Breast epithelium (tissue), 4 donors: ENCODE measurements at regions of chr5 and their contacts with region 1.

Region 1: GRCh38 chr5:151659001-151659754 is 27.5 kb downstream of the SPARC start:
- DNase-seq: peak; percentile 55 to 84
- H3K4me3 ChIP-seq: no peak overlapping the region
- H3K27ac ChIP-seq: peak overlapping the region; percentile 25 to 53
- H3K4me1 ChIP-seq: peaks cover 0 to 8% of the 10 kb centered on the region in 2 donors
- H3K27me3 ChIP-seq: no peaks in the 10 kb centered on the region
- CTCF ChIP-seq: peak; percentile 77 to 91 (median 88)
- POLR2A ChIP-seq: no peak

Region 2: DNA sequence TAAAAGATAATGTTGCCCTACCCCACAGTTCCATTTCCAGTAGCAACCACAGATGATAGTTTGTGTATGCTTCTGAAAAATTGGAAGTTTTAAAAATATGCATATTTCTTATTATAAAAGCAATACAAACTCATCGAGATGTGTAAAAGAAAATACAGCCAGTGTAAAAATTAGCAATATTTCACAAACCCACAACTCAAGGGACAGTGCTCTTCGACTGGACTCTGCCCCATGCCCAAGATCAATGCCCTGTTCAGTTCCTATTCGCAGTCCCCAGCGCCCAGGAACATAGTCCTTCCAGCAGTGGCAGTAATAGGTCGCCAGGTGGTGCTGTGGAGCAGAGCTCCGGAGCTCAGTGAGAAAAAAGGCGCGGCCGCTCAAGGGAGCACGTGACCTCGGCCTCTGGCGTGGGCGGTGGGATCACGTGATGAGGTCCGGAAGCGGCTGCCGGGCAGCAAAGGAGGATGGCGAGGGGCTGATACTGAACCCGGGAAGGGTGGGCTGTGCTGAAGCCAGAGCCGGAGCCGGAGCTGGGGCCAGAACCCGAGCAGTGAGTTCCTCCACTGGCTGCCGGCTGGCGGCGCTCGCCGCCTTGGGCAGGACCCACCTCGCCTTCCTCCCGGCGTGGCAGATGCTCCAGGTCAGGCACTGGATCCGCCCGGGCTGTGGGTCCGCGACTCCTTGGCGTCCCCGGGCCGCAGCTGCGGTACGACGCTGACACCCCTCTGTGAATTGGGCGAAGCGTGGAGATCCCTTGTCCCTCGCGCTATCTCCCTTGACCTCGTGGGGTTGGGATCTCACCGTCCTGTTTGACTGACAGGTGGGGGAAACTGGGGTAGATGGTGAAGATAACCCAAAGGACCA is 211.8 kb before region 1 on chr5 and contains the start of gene SLC36A1:
- intact Hi-C with region 1: loop called (anchors 5 kb)
- DNase-seq: peak; percentile 90 to 92
- H3K4me3 ChIP-seq: peak within 1 kb of the TSS; percentile 61 to 71 (median 65)
- H3K27ac ChIP-seq: peak within 1 kb of the TSS; percentile 65 to 67
- H3K4me1 ChIP-seq: no peaks in the 10 kb centered on the region
- H3K27me3 ChIP-seq: no peaks in the 10 kb centered on the region
- CTCF ChIP-seq: peak; percentile 92 to 95 (median 93)
- POLR2A ChIP-seq: no peak
- total RNA-seq, gene SLC36A1: 10.8 to 14.1 (median 11.4) TPM

Region 3: GRCh38 chr5:151637676-151638075 is 21.5 kb before region 1 on chr5:
- intact Hi-C with region 1: no loop called
- DNase-seq: no peak
- H3K4me3 ChIP-seq: no peak overlapping the region
- H3K27ac ChIP-seq: peak overlapping the region; percentile 40 to 52
- H3K4me1 ChIP-seq: no peaks in the 10 kb centered on the region
- H3K27me3 ChIP-seq: no peaks in the 10 kb centered on the region
- CTCF ChIP-seq: no peak
- POLR2A ChIP-seq: no peak

Region 4: DNA sequence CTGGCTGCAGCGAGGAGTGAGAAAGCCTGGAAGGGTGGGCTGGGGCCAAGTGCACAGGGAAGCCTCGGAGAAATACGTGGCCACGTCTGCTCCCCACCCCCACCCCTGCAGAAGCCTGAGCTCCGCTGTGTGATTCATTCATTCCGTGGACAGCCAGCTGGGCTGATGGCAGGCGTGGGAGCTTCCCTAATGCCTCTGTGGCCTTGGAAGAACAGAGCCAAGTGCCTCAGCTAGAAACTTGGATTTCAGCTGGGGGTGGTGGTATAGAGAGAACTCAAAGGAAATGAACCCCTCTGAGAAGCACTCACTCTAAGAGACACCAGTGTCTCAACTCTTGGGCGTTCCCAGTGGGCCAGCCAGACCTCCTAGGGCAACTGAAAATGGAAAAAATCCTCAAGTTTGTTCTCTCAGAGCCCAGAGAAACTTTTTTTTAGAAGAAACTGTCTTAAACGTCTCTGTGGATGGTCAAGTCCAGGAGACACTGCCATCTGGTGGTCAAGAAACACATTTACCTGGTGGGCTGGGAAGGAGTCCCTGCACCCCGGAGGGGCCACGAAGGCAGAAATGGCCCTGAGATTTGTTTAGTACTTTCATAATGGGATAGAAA is 81.3 kb after region 1 on chr5:
- intact Hi-C with region 1: loop called (anchors 5 kb)
- DNase-seq: peak in 1 of 2 donors; percentile 35
- H3K4me3 ChIP-seq: no peak overlapping the region
- H3K27ac ChIP-seq: peak overlapping the region; percentile 12 to 71
- H3K4me1 ChIP-seq: no peaks in the 10 kb centered on the region
- H3K27me3 ChIP-seq: no peaks in the 10 kb centered on the region
- CTCF ChIP-seq: peak; percentile 67 to 89 (median 84)
- POLR2A ChIP-seq: no peak

Region 5: DNA sequence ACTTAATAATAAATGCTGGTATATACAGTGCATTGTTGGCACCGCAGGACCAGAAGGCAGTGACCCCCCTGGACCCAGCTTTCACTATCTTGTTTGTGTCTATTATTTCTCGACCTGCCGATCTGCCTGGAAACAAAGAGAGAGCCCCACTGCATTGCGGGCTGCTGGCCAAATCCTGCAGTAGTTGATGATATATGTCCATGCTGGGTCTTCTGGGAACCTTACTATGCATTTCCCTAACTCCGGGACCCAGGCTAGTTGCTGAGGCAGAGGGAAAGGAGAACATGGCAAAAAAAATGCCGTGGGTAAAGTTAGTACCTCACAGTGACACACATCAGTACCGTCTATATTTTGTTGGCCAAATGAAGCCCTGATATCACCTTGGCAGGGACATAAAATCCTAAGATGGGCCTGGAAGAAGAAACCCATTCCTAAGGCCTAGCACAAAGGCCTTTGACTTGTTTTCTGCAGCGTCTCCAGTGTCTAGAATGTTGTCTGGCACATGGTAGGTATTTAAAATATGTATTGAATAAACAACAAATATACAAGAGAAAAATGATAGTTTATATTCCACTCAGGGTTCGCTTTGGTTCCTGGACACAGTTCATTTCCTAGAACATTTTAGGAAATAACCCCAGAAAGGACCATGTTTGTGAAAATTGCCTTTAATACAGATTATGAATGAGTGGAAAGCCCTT is 699.8 kb after region 1 on chr5:
- intact Hi-C with region 1: no loop called
- DNase-seq: no peak
- H3K4me3 ChIP-seq: no peak overlapping the region
- H3K27ac ChIP-seq: no peak overlapping the region
- H3K4me1 ChIP-seq: no peaks in the 10 kb centered on the region
- H3K27me3 ChIP-seq: no peaks in the 10 kb centered on the region
- CTCF ChIP-seq: no peak
- POLR2A ChIP-seq: no peak